Activated T-helper 1 cell treated with anti-CD3 and anti-CD28 coated beads, Interleukin-12 subunit alpha, Interleukin-12 subunit beta, Interleukin-2, Interleukin-4 antibody, amounts not matched to agents 30 ng/mL and 10 ng/mL and 1 ng/mL, durations not matched to agents 14 hours and 24 hours and 36 hours (primary cell): ENCODE measurements at regions of chr17 and their contacts with region 1.

Region 1: DNA sequence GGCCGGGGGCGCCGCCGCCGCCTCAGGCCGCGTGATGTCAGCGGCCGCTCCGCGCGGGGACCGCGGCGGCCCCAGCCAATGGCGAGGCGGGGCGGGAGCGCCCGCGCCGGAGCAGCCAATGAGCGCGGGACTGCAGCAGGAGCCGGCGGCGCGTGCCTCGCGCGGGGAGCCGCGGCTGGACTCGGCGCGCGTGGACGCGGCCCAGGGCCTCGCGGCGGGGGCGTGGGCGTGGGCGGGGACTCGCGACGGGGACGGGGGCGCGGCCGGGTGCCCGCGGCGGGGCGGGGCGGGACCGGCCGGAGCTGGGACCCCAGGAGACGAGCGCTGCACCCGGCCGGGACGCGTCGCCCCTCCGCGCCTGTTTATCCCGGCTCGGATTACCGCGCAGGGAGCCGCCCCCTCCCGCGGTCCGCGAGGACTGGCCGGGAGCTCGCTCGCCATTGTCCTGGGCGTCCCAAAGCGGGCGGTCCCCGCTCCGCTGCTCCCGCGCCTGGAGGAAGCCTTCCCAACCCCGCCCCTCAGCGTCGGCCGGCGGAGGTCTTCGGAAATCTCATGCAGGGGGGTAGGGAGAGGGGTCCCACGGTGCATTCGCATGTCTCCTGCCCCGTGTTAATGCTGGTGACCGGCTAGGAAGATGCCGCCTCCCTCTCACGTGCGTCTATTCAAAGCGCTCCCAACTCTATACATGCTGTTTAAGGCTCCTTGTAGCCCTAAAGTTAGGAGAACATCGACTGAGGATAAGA is at the start of gene RNF157:
- DNase-seq: peak; percentile 75
- H3K4me3 Mint-ChIP-seq: peak within 1 kb of the TSS; percentile 90
- H3K27ac Mint-ChIP-seq: peak within 1 kb of the TSS; percentile 90
- H3K4me1 Mint-ChIP-seq: peaks cover 69% of the 10 kb centered on the region
- H3K27me3 Mint-ChIP-seq: no peaks in the 10 kb centered on the region
- total RNA-seq, gene RNF157: 50.4 and 51.7 TPM in 2 replicates

Region 2: GRCh38 chr17:76223802-76224201 is 16.8 kb before region 1 on chr17:
- intact Hi-C with region 1: no loop called
- DNase-seq: no peak
- H3K4me3 Mint-ChIP-seq: no peak overlapping the region
- H3K27ac Mint-ChIP-seq: no peak overlapping the region
- H3K4me1 Mint-ChIP-seq: peaks cover 26% of the 10 kb centered on the region
- H3K27me3 Mint-ChIP-seq: no peaks in the 10 kb centered on the region

Region 3: GRCh38 chr17:76271669-76272540 is 31.3 kb after region 1 on chr17:
- intact Hi-C with region 1: loop called (anchors 2 kb)
- DNase-seq: peak; percentile 70
- H3K4me3 Mint-ChIP-seq: peak overlapping the region; percentile 79
- H3K27ac Mint-ChIP-seq: peak overlapping the region; percentile 94
- H3K4me1 Mint-ChIP-seq: peaks cover 45% of the 10 kb centered on the region
- H3K27me3 Mint-ChIP-seq: no peaks in the 10 kb centered on the region

Region 4: DNA sequence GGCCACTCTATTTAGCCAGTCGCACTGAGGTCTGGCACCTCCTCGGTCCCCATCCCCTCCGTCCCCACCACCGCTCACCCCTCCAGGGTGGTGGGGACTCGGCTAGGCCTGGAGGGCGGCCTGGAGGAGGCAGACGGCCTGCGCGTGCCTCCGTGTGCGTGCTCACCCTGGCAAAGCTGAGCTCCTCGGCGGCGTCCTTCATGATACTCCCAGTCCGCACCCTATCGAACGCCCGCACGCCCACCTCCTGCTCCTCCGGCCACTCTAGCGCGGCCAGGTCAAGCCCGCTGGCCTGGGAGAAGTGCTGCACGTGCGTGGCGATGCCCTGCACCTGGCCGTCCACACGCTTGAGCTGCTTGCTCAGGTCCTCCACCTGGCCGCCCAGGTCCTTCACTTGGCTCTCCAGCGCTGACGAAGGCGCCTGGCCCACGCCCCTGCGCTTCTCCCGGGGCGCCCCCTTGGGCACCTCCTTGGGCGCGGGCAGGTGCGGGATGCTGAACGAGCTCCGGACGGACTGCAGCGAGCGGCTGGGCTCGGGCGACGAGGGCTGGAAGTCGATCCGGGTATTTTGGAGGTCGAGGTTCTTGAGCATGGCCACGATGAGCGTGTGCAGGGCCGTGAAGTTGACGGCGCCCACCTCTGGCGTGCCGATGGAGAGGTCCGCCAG is 66.8 kb after region 1 on chr17:
- intact Hi-C with region 1: no loop called
- DNase-seq: no peak
- H3K4me3 Mint-ChIP-seq: no peak overlapping the region
- H3K27ac Mint-ChIP-seq: no peak overlapping the region
- H3K4me1 Mint-ChIP-seq: no peaks in the 10 kb centered on the region
- H3K27me3 Mint-ChIP-seq: no peaks in the 10 kb centered on the region

Region 5: DNA sequence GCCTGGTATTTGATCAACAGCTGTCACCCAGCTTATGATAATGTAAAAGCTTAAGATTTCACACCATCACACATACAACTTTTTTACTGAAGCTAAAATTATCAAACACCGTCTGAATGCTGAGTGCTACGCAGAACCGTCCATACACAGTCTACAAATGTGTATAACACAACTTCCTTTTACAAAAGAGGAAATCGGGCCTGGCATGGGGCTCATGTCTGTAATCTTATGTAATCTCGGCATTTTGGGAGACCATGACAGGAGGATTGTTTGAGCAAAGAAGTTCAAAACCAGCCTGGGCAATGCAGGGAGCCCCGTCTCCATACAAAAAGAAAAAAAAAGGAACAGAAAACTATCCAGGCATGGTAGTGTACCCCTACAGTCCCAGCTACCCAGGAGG is 87.1 kb after region 1 on chr17:
- intact Hi-C with region 1: no loop called
- DNase-seq: no peak
- H3K4me3 Mint-ChIP-seq: no peak overlapping the region
- H3K27ac Mint-ChIP-seq: no peak overlapping the region
- H3K4me1 Mint-ChIP-seq: no peaks in the 10 kb centered on the region
- H3K27me3 Mint-ChIP-seq: no peaks in the 10 kb centered on the region